PC-9 (cell line): ENCODE measurements at regions of chr10 and their contacts with region 1.

Region 1: DNA sequence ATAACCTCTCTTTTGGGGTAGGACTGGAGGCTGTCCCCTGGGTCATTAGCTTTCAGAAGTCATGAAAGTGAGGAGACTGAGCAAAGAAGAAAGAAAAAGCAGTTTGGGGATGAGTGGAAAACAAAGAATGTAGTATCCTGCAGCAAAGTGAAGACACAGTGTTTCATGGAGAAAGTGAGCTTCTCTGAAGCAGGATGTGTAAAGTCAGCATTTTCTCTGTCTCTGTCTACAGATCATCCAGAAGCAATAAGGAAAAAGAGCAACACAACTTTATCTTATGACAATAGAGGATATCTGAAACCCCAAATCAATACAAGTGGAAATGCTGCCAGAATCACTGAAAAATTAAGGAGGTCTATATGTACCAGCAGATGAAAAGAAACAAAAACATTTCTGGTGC is 28.4 kb upstream of the ZNF248 start:
- DNase-seq: no peak
- H3K4me3 ChIP-seq: no peak overlapping the region
- H3K27ac ChIP-seq: no peak overlapping the region
- H3K4me1 ChIP-seq: no peaks in the 10 kb centered on the region
- H3K27me3 ChIP-seq: no peaks in the 10 kb centered on the region
- CTCF ChIP-seq: no peak

Region 2: GRCh38 chr10:36692759-36693158 is 1193.1 kb before region 1 on chr10:
- CTCF ChIA-PET with region 1: interaction called, 10 read pairs
- POLR2A ChIA-PET with region 1: no interaction called
- intact Hi-C with region 1: no loop called
- DNase-seq: no peak
- H3K4me3 ChIP-seq: no peak overlapping the region
- H3K27ac ChIP-seq: no peak overlapping the region
- H3K4me1 ChIP-seq: no peaks in the 10 kb centered on the region
- H3K27me3 ChIP-seq: peaks cover 4% of the 10 kb centered on the region; the same call in 1 of the 2 replicates
- CTCF ChIP-seq: no peak

Region 3: GRCh38 chr10:37952056-37952755 is 66.4 kb after region 1 on chr10:
- CTCF ChIA-PET with region 1: no interaction called
- POLR2A ChIA-PET with region 1: no interaction called
- intact Hi-C with region 1: no loop called
- DNase-seq: peak in 1 of 2 experiments; percentile 34
- H3K4me3 ChIP-seq: no peak overlapping the region
- H3K27ac ChIP-seq: no peak overlapping the region
- H3K4me1 ChIP-seq: no peaks in the 10 kb centered on the region
- H3K27me3 ChIP-seq: no peaks in the 10 kb centered on the region
- CTCF ChIP-seq: no peak